ENCODE measurements at regions of chr2 and their contacts with region 1.

Region 1: GRCh38 chr2:189613077-189613636 is 32.6 kb upstream of the SLC40A1 start:
- DNase-seq: peak; percentile 54 to 66
- H3K4me3 ChIP-seq: no peak overlapping the region
- H3K4me3 Mint-ChIP-seq: peak overlapping the region; percentile 56
- H3K27ac Mint-ChIP-seq: peak overlapping the region; percentile 82
- H3K4me1 ChIP-seq: peaks cover 37% of the 10 kb centered on the region
- H3K4me1 Mint-ChIP-seq: peaks cover 32% of the 10 kb centered on the region
- H3K27me3 ChIP-seq: no peaks in the 10 kb centered on the region
- H3K27me3 Mint-ChIP-seq: no peaks in the 10 kb centered on the region
- CTCF ChIP-seq: no peak

Region 2: DNA sequence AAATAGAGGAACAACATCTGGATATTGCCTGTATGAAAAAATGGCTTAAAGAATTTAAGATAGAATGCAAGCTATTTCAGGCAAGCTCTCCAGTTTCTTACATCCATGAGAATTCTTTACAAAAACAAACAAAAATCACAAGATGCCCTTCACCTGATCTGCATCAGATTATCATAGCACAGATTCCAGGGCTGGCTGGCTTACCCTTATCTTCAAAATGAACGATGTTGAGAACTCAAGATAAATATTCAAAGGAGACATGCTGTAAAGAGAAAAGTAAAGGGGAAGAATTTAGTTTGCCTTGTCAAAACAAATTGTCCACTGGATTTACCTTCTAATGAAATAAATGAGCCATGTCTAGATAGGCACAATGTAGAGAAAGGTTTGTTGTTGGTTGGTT is 13.9 kb before region 1 on chr2:
- CTCF ChIA-PET with region 1: no interaction called
- POLR2A ChIA-PET with region 1: no interaction called
- intact Hi-C with region 1: loop called (anchors 2 kb)
- DNase-seq: peak; percentile 76 to 81
- H3K4me3 ChIP-seq: no peak overlapping the region
- H3K4me3 Mint-ChIP-seq: peak overlapping the region; percentile 5
- H3K27ac Mint-ChIP-seq: peak overlapping the region; percentile 83
- H3K4me1 ChIP-seq: peaks cover 36% of the 10 kb centered on the region
- H3K4me1 Mint-ChIP-seq: peaks cover 22% of the 10 kb centered on the region
- H3K27me3 ChIP-seq: no peaks in the 10 kb centered on the region
- H3K27me3 Mint-ChIP-seq: no peaks in the 10 kb centered on the region
- CTCF ChIP-seq: no peak

Region 3: GRCh38 chr2:189729430-189729829 is 116.3 kb after region 1 on chr2:
- CTCF ChIA-PET with region 1: no interaction called
- POLR2A ChIA-PET with region 1: no interaction called
- intact Hi-C with region 1: no loop called
- DNase-seq: no peak
- H3K4me3 ChIP-seq: no peak overlapping the region
- H3K4me3 Mint-ChIP-seq: no peak overlapping the region
- H3K27ac Mint-ChIP-seq: no peak overlapping the region
- H3K4me1 ChIP-seq: no peaks in the 10 kb centered on the region
- H3K4me1 Mint-ChIP-seq: no peaks in the 10 kb centered on the region
- H3K27me3 ChIP-seq: no peaks in the 10 kb centered on the region
- H3K27me3 Mint-ChIP-seq: no peaks in the 10 kb centered on the region
- CTCF ChIP-seq: no peak

Measured in Caco-2 (cell line).